ENCODE measurements at regions of chr14 and their contacts with region 1.

Region 1: GRCh38 chr14:50447461-50447860 is 50.8 kb upstream of the CDKL1 start:
- DNase-seq: peak; percentile 93
- ATAC-seq: peak; percentile 75
- H3K4me3 ChIP-seq: no peak overlapping the region
- H3K27ac ChIP-seq: peak overlapping the region; percentile 50
- H3K4me1 ChIP-seq: peaks cover 31% of the 10 kb centered on the region
- H3K27me3 ChIP-seq: no peaks in the 10 kb centered on the region
- CTCF ChIP-seq: no peak

Region 2: DNA sequence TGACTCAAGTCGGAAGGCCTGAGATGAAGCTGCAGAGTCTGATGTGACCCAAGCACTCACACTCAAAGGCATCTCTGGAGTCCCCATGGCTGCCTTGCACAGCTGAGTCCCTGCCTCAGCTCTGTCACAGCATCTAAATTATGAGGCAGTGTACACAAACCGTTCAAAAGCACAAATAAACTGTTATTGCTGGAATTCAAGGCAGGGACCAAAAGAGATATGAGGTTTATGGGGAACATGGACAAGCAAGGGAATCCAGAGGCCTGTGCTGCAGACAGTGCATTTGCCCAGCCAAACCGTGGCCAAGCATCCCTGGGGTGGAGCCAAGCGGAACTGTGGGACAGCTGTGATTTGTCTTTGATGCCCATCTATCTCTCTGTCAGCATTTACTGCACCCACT is 952.6 kb before region 1 on chr14:
- CTCF ChIA-PET with region 1: no interaction called
- POLR2A ChIA-PET with region 1: no interaction called
- intact Hi-C with region 1: no loop called
- DNase-seq: no peak
- ATAC-seq: no peak
- H3K4me3 ChIP-seq: no peak overlapping the region
- H3K27ac ChIP-seq: no peak overlapping the region
- H3K4me1 ChIP-seq: peaks cover 4% of the 10 kb centered on the region; the same call in 1 of the 2 replicates
- H3K27me3 ChIP-seq: peaks cover 4% of the 10 kb centered on the region; the same call in 1 of the 2 replicates
- CTCF ChIP-seq: no peak

Region 3: GRCh38 chr14:49620182-49621113 is 827.0 kb before region 1 on chr14 and contains the starts of genes MGAT2 and RPL36AL:
- CTCF ChIA-PET with region 1: no interaction called
- POLR2A ChIA-PET with region 1: no interaction called
- intact Hi-C with region 1: no loop called
- DNase-seq: peak; percentile 99
- ATAC-seq: peak; percentile 91
- H3K4me3 ChIP-seq: peak within 1 kb of the TSS; percentile 92
- H3K27ac ChIP-seq: peak within 1 kb of the TSS; percentile 85
- H3K4me1 ChIP-seq: peaks cover 45% of the 10 kb centered on the region
- H3K27me3 ChIP-seq: no peaks in the 10 kb centered on the region
- CTCF ChIP-seq: peak; percentile 31; the same call in 1 of the 2 replicates
- total RNA-seq, gene MGAT2: 39.5 and 51.4 TPM in 2 replicates
- total RNA-seq, gene RPL36AL: 408 and 411 TPM in 2 replicates

Region 4: DNA sequence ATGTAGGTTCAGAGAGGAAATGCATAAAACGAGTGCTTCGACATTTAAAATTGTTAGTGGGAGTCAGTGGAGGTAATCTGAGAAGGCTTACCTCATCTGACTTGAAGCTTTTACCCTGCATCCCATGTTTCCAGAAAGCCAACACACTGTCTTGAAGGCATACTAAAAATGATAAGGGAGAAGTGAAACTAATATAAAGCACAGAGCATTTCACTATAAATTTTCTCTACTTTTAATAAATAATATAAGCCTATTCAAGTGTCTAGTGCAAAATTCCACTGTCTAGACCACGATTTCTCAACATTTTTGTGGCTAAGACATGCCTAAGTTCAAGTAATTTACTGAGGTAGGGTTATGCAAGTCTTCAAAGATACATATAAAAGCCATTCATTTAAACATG is 21.6 kb before region 1 on chr14:
- CTCF ChIA-PET with region 1: interaction called, 5 read pairs
- POLR2A ChIA-PET with region 1: no interaction called
- intact Hi-C with region 1: loop called (anchors 2 kb)
- DNase-seq: no peak
- ATAC-seq: no peak
- H3K4me3 ChIP-seq: no peak overlapping the region
- H3K27ac ChIP-seq: no peak overlapping the region
- H3K4me1 ChIP-seq: no peaks in the 10 kb centered on the region
- H3K27me3 ChIP-seq: no peaks in the 10 kb centered on the region
- CTCF ChIP-seq: no peak

Region 5: GRCh38 chr14:50475462-50475861 is 28.0 kb after region 1 on chr14:
- CTCF ChIA-PET with region 1: no interaction called
- POLR2A ChIA-PET with region 1: no interaction called
- intact Hi-C with region 1: loop called (anchors 1 kb)
- DNase-seq: peak; percentile 95
- ATAC-seq: peak; percentile 100
- H3K4me3 ChIP-seq: no peak overlapping the region
- H3K27ac ChIP-seq: peak overlapping the region; percentile 26
- H3K4me1 ChIP-seq: peaks cover 11% of the 10 kb centered on the region; the same call in 1 of the 2 replicates
- H3K27me3 ChIP-seq: no peaks in the 10 kb centered on the region
- CTCF ChIP-seq: no peak

Region 6: GRCh38 chr14:50520947-50521815 is 73.7 kb after region 1 on chr14:
- CTCF ChIA-PET with region 1: no interaction called
- POLR2A ChIA-PET with region 1: no interaction called
- intact Hi-C with region 1: loop called (anchors 1 kb)
- DNase-seq: peak; percentile 93
- ATAC-seq: peak; percentile 92
- H3K4me3 ChIP-seq: 0 out of 2 replicates have a peak overlapping the region, but pooled peaks have one; percentile 2
- H3K27ac ChIP-seq: peak overlapping the region; percentile 88
- H3K4me1 ChIP-seq: peaks cover 32% of the 10 kb centered on the region
- H3K27me3 ChIP-seq: no peaks in the 10 kb centered on the region
- CTCF ChIP-seq: no peak

Region 7: DNA sequence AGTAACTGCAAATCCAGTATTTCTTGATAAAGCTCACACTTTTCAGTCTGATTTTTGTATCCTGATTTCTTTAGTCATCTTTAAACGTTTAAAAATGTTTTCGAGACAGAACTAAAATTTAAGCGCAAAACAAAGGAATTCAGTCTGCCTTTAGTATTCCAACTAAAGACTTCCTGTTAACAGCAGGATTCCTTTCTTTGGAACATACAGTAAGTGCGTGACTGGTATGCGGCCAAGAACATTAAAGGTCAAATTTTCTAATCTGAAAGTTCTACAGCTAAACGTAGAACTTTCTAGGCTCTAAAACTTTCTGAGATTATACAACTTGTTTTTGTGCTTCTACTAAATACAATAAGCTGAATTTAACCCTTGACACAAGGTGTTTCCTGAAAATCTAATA is 210.7 kb after region 1 on chr14:
- CTCF ChIA-PET with region 1: no interaction called
- POLR2A ChIA-PET with region 1: no interaction called
- intact Hi-C with region 1: loop called (anchors 10 kb)
- DNase-seq: peak; percentile 38
- ATAC-seq: peak; percentile 37
- H3K4me3 ChIP-seq: peak overlapping the region; percentile 6; the same call in 1 of the 2 replicates
- H3K27ac ChIP-seq: peak overlapping the region; percentile 2; the same call in 1 of the 2 replicates
- H3K4me1 ChIP-seq: peaks cover 29% of the 10 kb centered on the region
- H3K27me3 ChIP-seq: no peaks in the 10 kb centered on the region
- CTCF ChIP-seq: no peak